Head of caudate nucleus (tissue), 42 donors: ENCODE measurements at regions of chr3 and their contacts with region 1.

Region 1: DNA sequence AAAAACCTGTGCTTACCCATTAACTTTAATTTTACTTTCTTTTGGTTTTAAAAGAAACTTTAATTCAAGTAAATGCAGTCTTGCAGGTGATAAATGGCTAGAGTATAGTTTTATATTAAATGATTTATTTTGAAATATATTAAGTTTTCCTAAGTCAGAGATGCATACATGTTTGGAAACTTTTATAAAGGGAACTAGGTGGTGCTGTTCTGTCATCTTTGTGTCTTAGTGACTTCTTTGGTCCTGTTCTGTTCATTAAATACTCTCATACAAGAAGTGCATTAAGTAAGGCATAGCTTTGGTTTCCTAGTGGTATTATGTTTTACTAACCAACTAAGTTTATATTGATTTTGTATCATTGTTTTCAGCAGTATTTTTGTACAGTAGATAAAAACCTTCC is 15.6 kb downstream of the CADM2 start:
- DNase-seq: no peak

Region 2: GRCh38 chr3:84318273-84318809 is 656.0 kb before region 1 on chr3:
- intact Hi-C with region 1: no loop called
- DNase-seq: no peak

Region 3: GRCh38 chr3:84547971-84548970 is 426.1 kb before region 1 on chr3:
- intact Hi-C with region 1: loop called (anchors 10 kb)
- DNase-seq: peak in 35 of 42 donors; percentile 3 to 69 (median 26)

Region 4: DNA sequence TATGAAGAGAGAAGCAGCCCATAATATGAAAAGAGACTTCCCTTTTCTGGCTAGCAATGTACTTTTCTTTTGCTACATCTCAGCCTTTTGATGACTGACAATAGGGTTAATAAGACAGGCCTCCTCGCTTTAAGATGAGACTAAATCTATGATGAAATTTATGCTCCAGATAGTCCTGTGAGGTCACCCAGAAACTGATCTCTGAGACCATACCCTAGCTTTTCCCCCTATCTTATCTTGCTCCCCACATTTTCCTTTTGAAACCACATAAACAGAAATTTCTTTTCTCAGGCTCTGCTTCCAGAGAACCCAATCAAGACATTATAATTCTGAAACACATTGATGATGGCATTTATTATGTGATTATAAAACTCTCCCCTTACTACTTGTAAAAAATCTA is 184.4 kb before region 1 on chr3:
- intact Hi-C with region 1: no loop called
- DNase-seq: no peak

Region 5: DNA sequence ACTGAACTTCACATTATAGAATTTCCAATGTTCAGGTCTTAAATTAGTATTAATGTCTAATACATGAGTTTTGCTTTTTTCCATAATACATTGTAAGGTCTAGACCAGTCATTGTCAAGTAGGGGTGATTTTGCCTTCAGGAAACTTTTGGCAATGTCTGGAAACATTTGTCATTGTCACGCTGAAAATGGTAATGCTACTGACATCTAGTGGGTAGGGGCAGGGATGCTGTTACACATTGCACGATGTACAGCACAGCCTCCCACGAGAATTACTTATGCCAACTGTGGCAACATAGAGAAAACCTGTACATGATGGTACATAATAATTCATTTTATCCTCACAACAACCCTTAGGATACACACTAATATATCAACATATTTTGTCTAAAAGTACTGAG is 368.6 kb after region 1 on chr3:
- intact Hi-C with region 1: loop called (anchors 10 kb)
- DNase-seq: peak in 29 of 42 donors; percentile 9 to 80 (median 51)